AG04449 (cell line): ENCODE measurements at regions of chr1 and their contacts with region 1.

Region 1: DNA sequence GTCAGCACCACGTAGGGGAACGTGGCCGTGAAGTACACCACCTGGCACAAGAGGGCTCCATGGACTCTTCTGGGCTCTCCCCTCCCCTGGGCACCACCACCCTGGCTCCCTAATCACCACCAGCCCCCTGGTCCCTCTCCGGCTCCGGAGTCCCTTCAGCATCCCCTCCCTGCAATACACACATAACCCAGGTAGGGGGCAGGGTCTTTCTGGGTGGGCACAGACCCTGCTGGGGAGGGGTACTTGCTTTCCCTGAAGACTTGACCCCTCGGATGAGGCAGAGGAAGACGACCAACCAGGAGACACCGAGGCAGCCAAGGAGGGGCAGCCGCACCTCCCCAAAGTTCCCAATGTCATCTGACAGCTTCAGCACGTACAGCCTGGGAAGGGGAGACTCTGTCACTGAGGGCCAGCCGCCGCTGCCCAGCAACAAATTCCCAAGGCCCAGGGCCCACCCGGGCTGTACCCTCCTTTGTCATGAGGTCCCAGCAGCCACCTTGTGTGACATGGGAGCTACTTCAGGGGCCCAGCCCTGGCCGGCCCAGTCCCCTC is 11.3 kb downstream of the CCDC24 start:
- DNase-seq: no peak
- H3K4me3 ChIP-seq: no peak overlapping the region
- CTCF ChIP-seq: no peak

Region 2: DNA sequence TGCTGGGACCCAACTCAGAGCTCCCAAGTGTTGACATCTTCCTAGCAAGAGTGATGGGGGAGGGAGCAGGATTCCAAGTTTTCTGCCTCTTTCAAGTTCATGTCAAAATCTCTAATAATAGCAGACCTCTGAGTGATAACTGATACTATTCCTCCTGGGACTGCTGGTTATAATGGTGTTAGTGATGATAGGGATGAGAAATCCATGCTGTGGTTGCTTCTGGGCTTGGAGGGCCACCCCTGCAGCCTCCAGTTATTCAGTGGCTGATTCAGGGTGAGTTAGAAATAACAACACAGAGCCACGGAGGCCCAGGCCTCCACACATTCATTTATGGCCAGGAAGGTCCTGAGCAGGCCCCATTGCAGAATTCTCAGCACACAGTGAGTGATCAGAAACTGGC is 109.7 kb before region 1 on chr1:
- CTCF ChIA-PET with region 1: no interaction called
- POLR2A ChIA-PET with region 1: no interaction called
- DNase-seq: no peak
- H3K4me3 ChIP-seq: no peak overlapping the region
- CTCF ChIP-seq: no peak

Region 3: GRCh38 chr1:43991476-43992231 is 11.0 kb before region 1 on chr1 and contains the start of gene CCDC24:
- CTCF ChIA-PET with region 1: interaction called, 103 read pairs
- POLR2A ChIA-PET with region 1: no interaction called
- DNase-seq: no peak
- H3K4me3 ChIP-seq: peak within 1 kb of the TSS; percentile 79
- CTCF ChIP-seq: peak; percentile 3

Region 4: DNA sequence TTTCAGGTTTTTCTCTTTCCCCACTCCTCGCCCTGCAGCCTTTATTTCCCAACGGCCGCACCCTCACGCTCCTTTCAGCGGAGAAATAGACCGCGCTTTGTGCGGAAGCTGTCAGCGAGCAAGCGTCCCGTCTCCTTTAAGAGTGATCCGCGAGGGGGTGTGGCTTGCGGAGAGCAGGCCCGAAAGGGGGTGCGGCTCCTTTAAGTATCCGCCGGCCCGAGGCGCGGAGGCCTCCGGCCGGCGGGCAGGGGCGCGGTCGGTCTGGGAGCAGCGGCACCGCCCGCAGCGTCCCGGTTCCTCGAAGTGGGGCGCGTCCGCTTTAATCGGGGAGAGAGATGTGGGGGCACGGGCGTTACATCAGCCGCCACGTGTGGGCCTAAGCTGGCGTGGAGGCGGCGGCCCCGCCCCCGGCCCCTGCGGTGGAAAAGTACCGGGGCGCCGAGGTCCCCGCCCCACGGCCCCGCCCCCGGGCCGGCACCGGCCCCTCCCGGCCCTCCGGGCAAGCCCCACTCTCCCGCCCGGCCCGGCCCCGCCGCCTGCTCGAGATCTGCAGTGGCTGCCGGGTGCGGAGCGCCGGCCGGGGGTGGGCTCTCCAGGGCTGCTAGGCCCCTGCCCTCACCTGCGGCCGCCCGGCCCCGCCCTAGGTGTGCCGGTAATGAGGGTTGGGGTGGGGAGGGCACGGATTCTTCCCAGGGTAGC is 27.4 kb after region 1 on chr1:
- CTCF ChIA-PET with region 1: interaction called, 195 read pairs
- POLR2A ChIA-PET with region 1: no interaction called
- DNase-seq: no peak
- H3K4me3 ChIP-seq: peak overlapping the region; percentile 79
- CTCF ChIP-seq: no peak

Region 5: DNA sequence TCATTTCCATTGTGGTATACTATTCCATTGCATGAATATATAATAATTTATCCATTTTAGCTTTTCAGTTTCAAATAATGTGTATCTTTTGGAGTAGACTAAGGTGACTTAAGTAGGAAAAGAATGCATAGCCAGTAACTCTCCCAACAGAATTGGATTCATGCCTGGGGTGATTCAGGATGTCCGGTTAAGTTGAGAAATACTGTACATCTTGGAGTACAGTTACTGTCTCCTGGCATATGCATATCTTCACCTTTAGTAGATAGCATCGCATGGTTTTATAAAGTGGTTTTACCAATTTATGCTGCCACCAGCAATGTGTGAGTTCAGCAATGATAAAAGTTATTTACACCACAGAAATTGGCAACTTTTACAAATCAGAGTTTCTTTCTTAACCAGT is 47.2 kb after region 1 on chr1:
- CTCF ChIA-PET with region 1: interaction called, 313 read pairs
- POLR2A ChIA-PET with region 1: interaction called, 3 read pairs
- DNase-seq: peak; percentile 91
- H3K4me3 ChIP-seq: no peak overlapping the region
- CTCF ChIP-seq: no peak

Region 6: GRCh38 chr1:44168520-44169098 is 165.9 kb after region 1 on chr1:
- CTCF ChIA-PET with region 1: no interaction called
- POLR2A ChIA-PET with region 1: no interaction called
- DNase-seq: no peak
- H3K4me3 ChIP-seq: no peak overlapping the region
- CTCF ChIP-seq: no peak

Region 7: GRCh38 chr1:44227211-44227610 is 224.5 kb after region 1 on chr1:
- CTCF ChIA-PET with region 1: no interaction called
- POLR2A ChIA-PET with region 1: no interaction called
- DNase-seq: no peak
- H3K4me3 ChIP-seq: no peak overlapping the region
- CTCF ChIP-seq: no peak

Region 8: GRCh38 chr1:44237721-44238457 is 235.2 kb after region 1 on chr1:
- CTCF ChIA-PET with region 1: interaction called, 12 read pairs
- POLR2A ChIA-PET with region 1: no interaction called
- DNase-seq: no peak
- H3K4me3 ChIP-seq: no peak overlapping the region
- CTCF ChIP-seq: peak; percentile 91